Psoas muscle (tissue), 8 donors: ENCODE measurements at regions of chr6 and their contacts with region 1.

Region 1: GRCh38 chr6:130885392-130886192 is 58.4 kb downstream of the SMLR1 start:
- DNase-seq: peak in 1 of 2 donors; percentile 17
- ATAC-seq: peak; percentile 80 to 94 (median 88)
- H3K4me3 ChIP-seq: no peak overlapping the region
- H3K27ac ChIP-seq: no peak overlapping the region
- H3K4me1 ChIP-seq: no peaks in the 10 kb centered on the region
- H3K27me3 ChIP-seq: no peaks in the 10 kb centered on the region
- CTCF ChIP-seq: peak; percentile 94

Region 2: GRCh38 chr6:130625825-130626527 is 259.6 kb before region 1 on chr6:
- intact Hi-C with region 1: no loop called
- DNase-seq: no peak
- ATAC-seq: no peak
- H3K4me3 ChIP-seq: no peak overlapping the region
- H3K27ac ChIP-seq: no peak overlapping the region
- H3K4me1 ChIP-seq: no peaks in the 10 kb centered on the region
- H3K27me3 ChIP-seq: no peaks in the 10 kb centered on the region
- CTCF ChIP-seq: no peak

Region 3: DNA sequence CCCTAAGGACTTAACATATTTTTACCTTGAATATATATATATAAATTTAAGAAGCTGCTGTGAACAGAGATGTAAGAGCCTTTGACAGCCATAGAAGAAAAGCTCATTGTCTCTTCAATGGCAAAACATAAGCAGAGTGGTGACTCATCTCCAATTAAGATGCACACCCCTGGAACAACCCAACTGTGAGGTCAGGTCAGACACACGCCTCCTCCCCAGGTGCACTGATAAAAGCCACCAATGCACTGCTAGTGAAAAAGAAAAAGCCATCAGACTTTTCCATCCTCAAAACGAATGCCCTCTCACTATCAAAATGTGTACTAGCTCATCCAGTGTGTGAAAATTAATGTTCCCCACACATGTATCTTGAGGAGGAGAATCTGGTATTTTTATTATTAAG is 41.7 kb after region 1 on chr6:
- intact Hi-C with region 1: no loop called
- DNase-seq: no peak
- ATAC-seq: no peak
- H3K4me3 ChIP-seq: no peak overlapping the region
- H3K27ac ChIP-seq: no peak overlapping the region
- H3K4me1 ChIP-seq: peaks cover 13% of the 10 kb centered on the region
- H3K27me3 ChIP-seq: no peaks in the 10 kb centered on the region
- CTCF ChIP-seq: no peak

Region 4: GRCh38 chr6:131116749-131117360 is 231.3 kb after region 1 on chr6:
- intact Hi-C with region 1: loop called (anchors 1 to 2 kb)
- DNase-seq: no peak
- ATAC-seq: peak in 2 of 4 donors; percentile 50 to 65
- H3K4me3 ChIP-seq: no peak overlapping the region
- H3K27ac ChIP-seq: no peak overlapping the region
- H3K4me1 ChIP-seq: no peaks in the 10 kb centered on the region
- H3K27me3 ChIP-seq: no peaks in the 10 kb centered on the region
- CTCF ChIP-seq: peak; percentile 65

Region 5: DNA sequence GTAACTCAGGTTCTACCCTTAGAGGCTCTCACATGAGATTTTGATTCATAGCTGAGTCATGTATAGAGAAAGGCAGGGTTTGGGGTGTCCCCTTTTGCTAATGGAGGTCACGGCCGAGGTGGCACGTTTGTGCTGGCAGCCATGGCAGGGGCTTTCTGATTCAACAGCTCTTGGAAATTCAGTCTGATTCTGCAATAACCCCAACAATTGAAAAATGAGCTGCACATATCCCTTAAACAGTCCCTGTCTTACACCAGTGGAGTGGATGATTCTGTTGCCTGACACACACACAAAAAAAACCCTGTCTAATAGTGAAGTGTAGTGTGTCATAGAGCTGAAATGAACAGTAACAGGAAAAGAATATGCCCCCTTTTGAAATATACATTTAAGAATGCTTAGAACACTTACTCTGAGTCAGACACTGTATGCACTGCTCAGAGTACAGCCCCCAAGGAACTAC is 647.0 kb after region 1 on chr6:
- intact Hi-C with region 1: loop called (anchors 5 to 10 kb)
- DNase-seq: no peak
- ATAC-seq: no peak
- H3K4me3 ChIP-seq: no peak overlapping the region
- H3K27ac ChIP-seq: no peak overlapping the region
- H3K4me1 ChIP-seq: no peaks in the 10 kb centered on the region
- H3K27me3 ChIP-seq: no peaks in the 10 kb centered on the region
- CTCF ChIP-seq: no peak

Region 6: DNA sequence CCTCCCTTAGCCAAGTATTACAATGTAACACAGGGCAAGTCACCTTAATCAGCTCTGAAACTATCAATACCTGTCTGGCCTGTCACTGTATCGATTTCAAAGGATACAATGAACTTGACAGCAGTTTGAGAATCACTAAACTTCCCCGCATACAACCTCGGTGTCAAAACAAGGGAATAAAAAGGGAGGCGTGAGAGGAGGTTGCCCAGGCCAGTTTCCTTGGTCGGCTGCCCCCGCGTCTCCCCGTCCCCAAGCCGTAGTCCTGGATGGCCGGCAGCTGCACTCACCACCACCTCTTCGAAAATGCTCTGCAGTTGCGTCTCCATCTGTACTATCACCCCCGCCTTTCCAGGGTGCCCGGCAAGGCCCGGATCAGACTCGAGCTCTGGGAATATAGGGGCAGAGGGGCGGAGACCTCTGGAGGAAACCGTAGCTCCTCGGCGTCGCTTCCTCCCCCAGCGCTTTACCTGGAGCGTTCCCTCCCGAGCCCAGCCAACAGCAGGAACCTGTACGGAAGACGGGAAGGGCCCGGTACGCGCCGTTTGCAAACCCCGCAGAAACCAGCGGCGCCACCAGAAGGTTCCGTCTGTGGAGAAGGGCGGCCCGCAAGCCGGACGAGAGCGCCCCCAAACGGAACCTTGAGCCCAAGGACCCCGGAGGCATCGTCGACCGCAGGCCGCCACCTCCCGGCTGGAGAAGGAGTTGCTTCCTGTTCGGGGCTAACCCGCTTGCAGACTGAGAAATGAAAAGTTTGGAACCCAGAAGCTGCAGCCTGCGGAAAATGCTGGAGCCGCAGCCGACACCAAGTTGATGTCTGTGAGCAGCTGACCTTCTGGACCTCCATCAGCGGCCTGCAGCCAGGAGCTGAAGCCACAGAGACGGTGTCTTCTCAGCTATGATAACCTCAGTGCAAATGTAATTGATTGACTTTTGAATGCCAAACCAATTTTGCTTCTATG is 742.4 kb after region 1 on chr6 and contains the start of gene MED23:
- intact Hi-C with region 1: loop called (anchors 5 to 10 kb)
- DNase-seq: peak; percentile 94 to 96
- ATAC-seq: peak; percentile 98 to 100 (median 99)
- H3K4me3 ChIP-seq: peak within 1 kb of the TSS; percentile 78
- H3K27ac ChIP-seq: peak within 1 kb of the TSS; percentile 78
- H3K4me1 ChIP-seq: peaks cover 6% of the 10 kb centered on the region
- H3K27me3 ChIP-seq: no peaks in the 10 kb centered on the region
- CTCF ChIP-seq: peak; percentile 92
- total RNA-seq, gene MED23: 7.9 to 11.2 (median 9.1) TPM